Sciatic nerve (tissue), 2 donors: ENCODE measurements at regions of chr16 and their contacts with region 1.

Region 1: GRCh38 chr16:29900102-29900887 is at the start of gene ASPHD1:
- DNase-seq: peak; percentile 81
- ATAC-seq: peak; percentile 83
- total RNA-seq, gene ASPHD1: 5.0 TPM

Region 2: DNA sequence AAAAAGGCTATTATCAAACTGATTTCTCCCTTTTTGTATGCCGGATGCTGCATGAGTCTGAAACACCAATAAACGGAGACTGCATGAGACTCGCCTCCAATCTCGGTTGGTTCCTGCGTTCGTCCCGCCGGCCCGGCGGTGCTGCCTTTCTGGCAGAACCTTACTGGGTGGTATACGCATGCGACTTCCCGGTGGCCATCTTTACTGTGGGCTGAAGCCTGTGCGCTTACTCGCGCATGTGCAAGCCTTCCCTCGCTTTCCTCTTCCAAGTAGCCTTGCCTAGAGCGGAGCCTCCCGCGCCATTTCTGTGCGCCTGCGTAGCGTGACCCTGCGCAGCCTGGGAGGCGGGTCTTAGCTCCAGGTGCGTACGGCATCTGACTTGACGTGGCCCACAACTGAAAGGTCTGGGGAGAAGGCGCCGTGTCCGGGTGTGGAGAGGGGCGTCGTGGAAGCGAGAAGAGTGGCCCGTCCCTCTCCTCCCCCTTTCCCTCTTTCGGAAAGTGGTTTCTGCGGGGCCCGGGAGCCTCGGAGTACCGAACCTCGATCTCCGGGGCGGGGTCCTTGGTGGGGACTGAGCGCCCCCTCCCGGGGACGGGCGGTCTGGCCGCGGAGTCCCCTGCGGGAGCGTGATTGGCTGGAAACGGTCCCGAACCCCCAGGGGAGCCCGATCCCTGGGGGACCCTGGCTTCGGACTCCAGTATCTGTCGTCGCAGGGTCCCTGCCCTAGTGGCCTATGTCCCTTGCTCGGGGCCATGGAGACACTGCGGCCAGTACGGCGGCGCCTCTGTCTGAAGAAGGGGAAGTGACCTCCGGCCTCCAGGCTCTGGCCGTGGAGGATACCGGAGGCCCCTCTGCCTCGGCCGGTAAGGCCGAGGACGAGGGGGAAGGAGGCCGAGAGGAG is 84.3 kb before region 1 on chr16 and contains the start of gene PAGR1:
- intact Hi-C with region 1: no loop called
- DNase-seq: peak; percentile 99
- ATAC-seq: peak; percentile 88
- total RNA-seq, gene PAGR1: 29.7 TPM

Region 3: DNA sequence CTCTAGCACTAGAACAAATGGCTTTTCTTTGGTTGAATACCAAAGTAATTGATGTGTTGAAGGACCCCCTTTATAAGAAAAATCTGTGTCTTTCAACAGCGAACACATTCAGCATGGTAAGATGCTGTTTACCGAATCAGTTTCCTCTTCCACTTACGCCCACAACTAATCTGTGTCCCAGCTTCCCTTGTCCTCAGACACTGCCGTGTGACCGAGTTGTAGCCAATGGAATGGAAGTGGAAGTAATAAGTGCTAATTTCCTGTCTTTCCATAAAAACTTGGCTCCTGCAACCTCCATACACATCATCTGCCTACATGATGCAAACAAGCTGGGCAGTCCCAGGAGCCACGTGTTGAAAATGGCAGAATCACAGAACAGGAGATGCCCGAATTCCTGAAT is 47.6 kb before region 1 on chr16:
- intact Hi-C with region 1: loop called (anchors 10 kb)
- DNase-seq: no peak
- ATAC-seq: no peak

Region 4: GRCh38 chr16:30010844-30011713 is 110.8 kb after region 1 on chr16 and contains the start of gene DOC2A:
- intact Hi-C with region 1: no loop called
- DNase-seq: no peak
- ATAC-seq: peak; percentile 18
- total RNA-seq, gene DOC2A: 0.67 TPM

Region 5: GRCh38 chr16:30025156-30025555 is 124.9 kb after region 1 on chr16:
- intact Hi-C with region 1: no loop called
- DNase-seq: no peak
- ATAC-seq: no peak

Region 6: DNA sequence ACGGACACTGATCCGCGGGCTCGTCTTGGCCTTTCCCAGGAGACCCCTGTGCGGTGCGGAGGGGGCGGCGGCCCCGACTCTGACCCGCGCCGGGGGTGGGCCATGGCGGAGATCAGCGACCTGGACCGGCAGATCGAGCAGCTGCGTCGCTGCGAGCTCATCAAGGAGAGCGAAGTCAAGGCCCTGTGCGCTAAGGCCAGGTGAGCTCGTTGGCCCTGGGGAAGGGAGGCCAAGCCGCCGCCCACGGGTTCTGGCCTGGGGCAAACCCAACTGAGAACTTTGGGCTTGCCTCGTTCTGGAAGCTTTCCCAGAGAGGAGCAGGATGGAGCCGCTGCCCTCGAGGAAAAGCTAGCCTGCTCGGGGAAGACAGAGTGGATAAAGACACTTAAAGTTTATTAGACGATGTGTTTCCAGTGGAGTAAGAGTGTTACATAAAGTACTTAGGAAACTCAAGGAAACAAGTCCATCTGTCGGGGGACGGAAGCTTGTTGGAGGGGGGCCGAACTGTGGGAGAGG is 176.0 kb after region 1 on chr16:
- intact Hi-C with region 1: no loop called
- DNase-seq: no peak
- ATAC-seq: peak; percentile 47